SK-N-SH (cell line): ENCODE measurements at regions of chr14 and their contacts with region 1.

Region 1: GRCh38 chr14:22900081-22900799 is 17.2 kb downstream of the REM2 start:
- DNase-seq: peak; percentile 72
- H3K4me3 ChIP-seq: no peak overlapping the region
- H3K27ac ChIP-seq: 0 out of 4 replicates have a peak overlapping the region, but pooled peaks of 1 of the 2 experiments have one; percentile 17
- H3K4me1 ChIP-seq: peaks cover 0 to 14% of the 10 kb centered on the region in 2 experiments; a peak in 3 of 4 replicates
- H3K27me3 ChIP-seq: no peaks in the 10 kb centered on the region
- CTCF ChIP-seq: peak; percentile 62
- EP300 ChIP-seq: no peak
- RAD21 ChIP-seq: peak; percentile 69

Region 2: GRCh38 chr14:22822571-22823098 is 77.6 kb before region 1 on chr14:
- CTCF ChIA-PET with region 1: interaction called, 27 read pairs
- POLR2A ChIA-PET with region 1: no interaction called
- DNase-seq: peak; percentile 91
- H3K4me3 ChIP-seq: peak overlapping the region in 1 of 2 experiments; percentile 44; a peak in 1 of 4 replicates
- H3K27ac ChIP-seq: peak overlapping the region in 1 of 2 experiments; percentile 15; a peak in 1 of 4 replicates
- H3K4me1 ChIP-seq: peaks cover 8 to 13% of the 10 kb centered on the region in 2 experiments; a peak in 2 of 4 replicates
- H3K27me3 ChIP-seq: no peaks in the 10 kb centered on the region
- CTCF ChIP-seq: peak; percentile 84
- EP300 ChIP-seq: no peak
- RAD21 ChIP-seq: peak; percentile 95

Region 3: GRCh38 chr14:22872033-22872832 is 28.0 kb before region 1 on chr14:
- CTCF ChIA-PET with region 1: interaction called, 77 read pairs
- POLR2A ChIA-PET with region 1: interaction called, 3 read pairs
- DNase-seq: peak; percentile 83
- H3K4me3 ChIP-seq: peak overlapping the region; percentile 77 to 93
- H3K27ac ChIP-seq: peak overlapping the region; percentile 83 to 87
- H3K4me1 ChIP-seq: peaks cover 8 to 17% of the 10 kb centered on the region in 2 experiments
- H3K27me3 ChIP-seq: no peaks in the 10 kb centered on the region
- CTCF ChIP-seq: peak; percentile 97
- EP300 ChIP-seq: no peak
- RAD21 ChIP-seq: peak; percentile 79

Region 4: DNA sequence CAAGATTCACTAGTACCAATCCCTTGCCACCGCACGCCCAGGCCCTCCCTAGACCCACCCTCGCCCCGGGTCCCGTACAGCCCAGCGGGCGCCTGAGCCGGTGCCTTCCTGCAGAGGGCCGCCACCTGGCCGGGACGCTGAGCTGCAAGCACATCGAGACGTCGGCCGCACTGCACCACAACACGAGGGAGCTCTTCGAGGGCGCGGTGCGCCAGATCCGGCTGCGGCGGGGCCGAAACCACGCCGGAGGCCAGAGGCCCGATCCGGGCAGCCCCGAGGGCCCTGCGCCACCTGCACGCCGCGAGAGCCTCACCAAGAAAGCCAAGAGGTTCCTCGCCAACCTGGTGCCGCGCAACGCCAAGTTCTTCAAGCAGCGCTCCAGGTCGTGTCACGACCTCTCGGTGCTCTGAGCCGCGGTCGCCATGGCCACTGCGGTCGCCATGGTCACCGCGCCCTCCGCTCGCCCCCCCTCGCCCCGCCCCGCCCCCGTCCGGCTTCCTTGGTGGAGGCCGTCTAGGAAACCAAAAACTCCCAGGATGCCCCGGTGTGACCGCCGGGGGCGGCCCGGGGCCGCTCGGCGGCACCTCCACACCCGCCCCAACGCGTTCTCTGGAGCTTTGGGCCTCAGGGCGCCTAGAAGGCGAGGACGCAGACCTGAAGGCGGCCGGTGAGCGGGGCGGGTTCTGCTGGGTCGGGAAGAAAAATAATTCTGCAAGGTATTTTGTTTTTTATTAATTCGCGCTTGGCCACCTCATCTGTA is 13.6 kb before region 1 on chr14:
- CTCF ChIA-PET with region 1: interaction called, 96 read pairs
- POLR2A ChIA-PET with region 1: no interaction called
- DNase-seq: peak; percentile 93
- H3K4me3 ChIP-seq: peak overlapping the region; percentile 63 to 82
- H3K27ac ChIP-seq: peak overlapping the region; percentile 75 to 92
- H3K4me1 ChIP-seq: peaks cover 8 to 45% of the 10 kb centered on the region in 2 experiments; a peak in 2 of 4 replicates
- H3K27me3 ChIP-seq: no peaks in the 10 kb centered on the region
- CTCF ChIP-seq: peak; percentile 15; the same call in 1 of the 2 replicates
- EP300 ChIP-seq: no peak
- RAD21 ChIP-seq: no peak

Region 5: DNA sequence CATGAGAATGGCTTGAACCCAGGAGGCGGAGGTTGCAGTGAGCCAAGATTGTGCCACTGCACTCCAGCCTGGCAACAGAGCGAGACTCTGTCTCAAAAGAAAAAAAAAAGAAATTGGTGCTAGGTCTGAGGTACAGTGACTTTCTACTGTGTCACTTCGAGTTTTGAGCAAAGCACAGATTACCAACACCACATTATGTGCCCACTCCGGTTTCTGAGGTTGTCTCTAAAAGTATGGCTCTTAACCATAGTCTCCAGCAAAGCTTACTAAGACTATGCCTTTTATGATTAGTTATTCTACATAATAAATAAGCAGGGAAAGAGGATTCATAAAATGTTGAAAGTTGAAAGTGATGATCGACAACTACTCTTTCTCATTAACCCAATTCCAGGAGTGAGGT is 10.7 kb after region 1 on chr14:
- CTCF ChIA-PET with region 1: interaction called, 34 read pairs
- POLR2A ChIA-PET with region 1: no interaction called
- DNase-seq: no peak
- H3K4me3 ChIP-seq: no peak overlapping the region
- H3K27ac ChIP-seq: no peak overlapping the region
- H3K4me1 ChIP-seq: no peaks in the 10 kb centered on the region
- H3K27me3 ChIP-seq: no peaks in the 10 kb centered on the region
- CTCF ChIP-seq: no peak
- EP300 ChIP-seq: no peak
- RAD21 ChIP-seq: no peak

Region 6: GRCh38 chr14:22918804-22919600 is 18.8 kb after region 1 on chr14 and contains the start of gene RBM23:
- CTCF ChIA-PET with region 1: interaction called, 34 read pairs
- POLR2A ChIA-PET with region 1: interaction called, 3 read pairs
- DNase-seq: peak; percentile 87
- H3K4me3 ChIP-seq: peak within 1 kb of the TSS; percentile 77 to 85
- H3K27ac ChIP-seq: peak within 1 kb of the TSS; percentile 97 to 98
- H3K4me1 ChIP-seq: peaks cover 0 to 9% of the 10 kb centered on the region in 2 experiments; a peak in 2 of 4 replicates
- H3K27me3 ChIP-seq: no peaks in the 10 kb centered on the region
- CTCF ChIP-seq: peak; percentile 17; the same call in 1 of the 2 replicates
- EP300 ChIP-seq: no peak
- RAD21 ChIP-seq: no peak
- polyA plus RNA-seq, gene RBM23: 52.4 and 65.5 TPM in 2 replicates

Region 7: GRCh38 chr14:23000860-23001259 is 100.6 kb after region 1 on chr14:
- CTCF ChIA-PET with region 1: no interaction called
- POLR2A ChIA-PET with region 1: no interaction called
- DNase-seq: no peak
- H3K4me3 ChIP-seq: no peak overlapping the region
- H3K27ac ChIP-seq: no peak overlapping the region
- H3K4me1 ChIP-seq: peaks cover 0 to 20% of the 10 kb centered on the region in 2 experiments; a peak in 2 of 4 replicates
- H3K27me3 ChIP-seq: no peaks in the 10 kb centered on the region
- CTCF ChIP-seq: no peak
- EP300 ChIP-seq: no peak
- RAD21 ChIP-seq: no peak